ENCODE measurements at regions of chr4 and their contacts with region 1.

Region 1: DNA sequence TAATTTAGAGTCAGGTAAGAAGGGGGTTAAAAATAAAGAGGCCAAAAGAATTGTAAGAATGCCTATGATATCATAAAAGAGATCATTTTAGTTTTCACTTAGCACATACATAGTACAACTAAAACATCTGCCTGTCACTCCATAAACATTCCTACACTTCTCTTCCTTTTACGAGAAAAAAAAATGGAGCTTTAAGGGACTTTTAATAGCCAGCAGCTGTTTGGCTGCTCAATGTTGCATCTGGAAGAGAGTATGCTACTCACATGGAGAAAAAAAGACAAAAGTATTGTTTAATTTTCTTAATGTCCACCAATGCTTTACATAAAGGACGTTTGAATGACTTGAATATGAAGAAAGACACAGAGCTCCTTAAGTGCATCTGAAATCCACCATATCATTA is 48.7 kb upstream of the TNIP3 start:
- DNase-seq: no peak
- H3K4me3 Mint-ChIP-seq: no peak overlapping the region
- H3K27ac Mint-ChIP-seq: no peak overlapping the region
- H3K4me1 Mint-ChIP-seq: peaks cover 16% of the 10 kb centered on the region
- H3K27me3 Mint-ChIP-seq: no peaks in the 10 kb centered on the region

Region 2: DNA sequence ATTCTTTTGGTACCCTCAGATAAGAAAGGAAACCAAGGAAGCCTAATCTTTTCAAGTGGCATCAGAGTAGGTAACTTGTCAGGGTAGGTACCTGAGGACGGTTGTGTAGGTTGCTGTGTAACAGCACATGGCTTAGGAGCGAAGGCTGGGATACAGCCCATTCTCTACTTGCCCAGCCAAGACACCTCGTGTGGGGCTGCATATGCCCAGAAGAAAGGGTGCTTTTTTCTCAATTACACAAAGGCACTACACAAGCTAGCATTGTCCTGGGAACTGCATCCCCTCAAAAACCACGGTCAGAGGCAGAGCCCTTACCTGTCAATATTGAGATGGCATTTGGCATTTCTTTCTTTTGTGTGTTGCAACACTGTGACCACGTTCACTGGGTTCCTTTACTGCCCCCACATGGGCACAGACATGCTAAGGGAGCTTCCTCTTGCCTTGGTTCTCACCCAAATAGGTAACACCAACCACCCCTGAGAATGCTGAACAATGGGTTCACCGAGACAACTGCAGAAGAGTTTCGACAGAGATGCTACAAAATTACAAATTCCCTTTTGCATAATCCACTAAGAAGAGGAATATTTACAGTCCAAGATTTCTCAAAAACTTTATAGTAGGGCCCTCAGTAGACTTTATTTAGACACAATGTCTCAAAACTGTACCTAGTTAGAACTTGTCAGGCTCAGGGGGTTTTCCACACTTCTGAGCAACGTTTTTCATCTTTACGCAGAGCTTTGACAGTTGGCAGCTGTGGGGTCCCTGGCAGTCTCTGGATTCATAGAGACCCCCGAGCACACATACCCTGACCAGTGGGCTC is 12.9 kb before region 1 on chr4:
- CTCF ChIA-PET with region 1: interaction called, 12 read pairs
- POLR2A ChIA-PET with region 1: interaction called, 3 read pairs
- intact Hi-C with region 1: no loop called
- DNase-seq: peak; percentile 66
- H3K4me3 Mint-ChIP-seq: peak overlapping the region; percentile 10
- H3K27ac Mint-ChIP-seq: peak overlapping the region; percentile 60
- H3K4me1 Mint-ChIP-seq: peaks cover 34% of the 10 kb centered on the region
- H3K27me3 Mint-ChIP-seq: no peaks in the 10 kb centered on the region

Region 3: DNA sequence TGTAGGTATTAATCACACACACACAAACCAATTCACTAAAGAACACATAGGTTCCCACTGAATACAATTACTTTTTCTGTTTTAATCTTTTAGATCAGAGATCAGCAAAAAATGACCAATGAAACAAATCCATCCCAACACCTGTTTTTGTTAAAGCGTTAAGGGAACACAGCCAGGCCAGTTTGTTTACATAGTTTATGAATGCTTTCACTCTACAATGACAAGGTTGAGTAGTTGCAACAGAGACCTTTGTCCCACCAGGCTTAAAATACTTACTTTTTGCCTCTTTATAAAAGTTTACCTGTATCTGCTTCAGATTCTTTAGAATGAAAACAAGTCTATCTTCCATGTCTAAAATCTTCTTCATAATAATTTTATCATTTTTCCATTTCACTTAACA is 288.1 kb after region 1 on chr4:
- CTCF ChIA-PET with region 1: no interaction called
- POLR2A ChIA-PET with region 1: no interaction called
- intact Hi-C with region 1: no loop called
- DNase-seq: no peak
- H3K4me3 Mint-ChIP-seq: no peak overlapping the region
- H3K27ac Mint-ChIP-seq: no peak overlapping the region
- H3K4me1 Mint-ChIP-seq: no peaks in the 10 kb centered on the region
- H3K27me3 Mint-ChIP-seq: peaks cover 27% of the 10 kb centered on the region

Measured in activated CD4-positive, alpha-beta memory T cell treated with anti-CD3 and anti-CD28 coated beads for 36 hours (primary cell).